Gastrocnemius medialis (tissue), 4 donors: ENCODE measurements at regions of chr20 and their contacts with region 1.

Region 1: DNA sequence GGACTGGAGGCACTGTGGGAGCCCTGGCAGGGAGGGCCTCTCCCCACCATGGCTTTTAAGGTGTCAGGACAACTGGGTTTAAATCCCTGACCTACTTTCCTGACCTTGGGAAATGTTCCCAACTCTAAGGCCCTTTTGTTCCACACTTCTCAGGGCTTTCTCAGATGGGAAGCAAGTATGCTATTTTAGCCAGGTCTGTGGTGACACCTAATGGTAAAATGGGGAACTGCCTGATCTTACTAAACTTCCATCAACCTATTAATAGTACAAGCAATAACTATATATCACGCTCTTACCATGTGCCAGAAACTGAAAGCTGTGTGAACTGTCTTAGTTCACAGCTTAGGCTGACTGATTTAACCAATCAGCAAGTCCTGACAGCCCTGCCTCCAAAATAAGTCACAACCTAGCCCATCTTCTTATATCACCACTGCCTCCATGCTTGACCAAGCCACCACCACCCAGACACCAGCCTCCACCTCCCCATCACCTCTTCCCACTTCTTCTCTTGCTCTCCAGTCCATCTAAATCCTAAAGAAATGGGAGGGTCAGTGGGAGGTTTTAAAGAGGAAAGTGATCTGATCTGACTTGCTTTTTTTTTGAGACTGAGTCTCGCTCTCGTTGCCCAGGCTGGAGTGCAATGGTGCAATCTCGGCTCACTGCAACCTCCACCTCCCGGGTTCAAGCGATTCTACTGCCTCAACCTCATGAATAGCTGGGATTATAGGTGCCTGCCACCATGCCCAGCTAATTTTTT is 6.9 kb upstream of the BLCAP start:
- DNase-seq: no peak
- ATAC-seq: peak; percentile 88 to 94
- H3K4me3 ChIP-seq: no peak overlapping the region
- H3K27ac ChIP-seq: peak overlapping the region in 1 of 4 donors; percentile 50
- H3K4me1 ChIP-seq: peaks cover 0 to 5% of the 10 kb centered on the region in 2 donors
- H3K27me3 ChIP-seq: no peaks in the 10 kb centered on the region
- CTCF ChIP-seq: peak; percentile 83 to 89 (median 88)
- POLR2A ChIP-seq: no peak

Region 2: GRCh38 chr20:36941401-36941835 is 593.2 kb before region 1 on chr20:
- in situ Hi-C with region 1: no loop called
- intact Hi-C with region 1: loop called (anchors 10 kb)
- DNase-seq: no peak
- ATAC-seq: no peak
- H3K4me3 ChIP-seq: no peak overlapping the region
- H3K27ac ChIP-seq: peak overlapping the region; percentile 62 to 85 (median 71)
- H3K4me1 ChIP-seq: peaks cover 45 to 70% of the 10 kb centered on the region in 2 donors
- H3K27me3 ChIP-seq: no peaks in the 10 kb centered on the region
- CTCF ChIP-seq: no peak
- POLR2A ChIP-seq: no peak

Region 3: GRCh38 chr20:37265152-37265551 is 269.4 kb before region 1 on chr20:
- in situ Hi-C with region 1: loop called (anchors 5 kb)
- intact Hi-C with region 1: loop called (anchors 1 kb)
- DNase-seq: no peak
- ATAC-seq: no peak
- H3K4me3 ChIP-seq: no peak overlapping the region
- H3K27ac ChIP-seq: no peak overlapping the region
- H3K4me1 ChIP-seq: no peaks in the 10 kb centered on the region
- H3K27me3 ChIP-seq: no peaks in the 10 kb centered on the region
- CTCF ChIP-seq: no peak
- POLR2A ChIP-seq: no peak

Region 4: DNA sequence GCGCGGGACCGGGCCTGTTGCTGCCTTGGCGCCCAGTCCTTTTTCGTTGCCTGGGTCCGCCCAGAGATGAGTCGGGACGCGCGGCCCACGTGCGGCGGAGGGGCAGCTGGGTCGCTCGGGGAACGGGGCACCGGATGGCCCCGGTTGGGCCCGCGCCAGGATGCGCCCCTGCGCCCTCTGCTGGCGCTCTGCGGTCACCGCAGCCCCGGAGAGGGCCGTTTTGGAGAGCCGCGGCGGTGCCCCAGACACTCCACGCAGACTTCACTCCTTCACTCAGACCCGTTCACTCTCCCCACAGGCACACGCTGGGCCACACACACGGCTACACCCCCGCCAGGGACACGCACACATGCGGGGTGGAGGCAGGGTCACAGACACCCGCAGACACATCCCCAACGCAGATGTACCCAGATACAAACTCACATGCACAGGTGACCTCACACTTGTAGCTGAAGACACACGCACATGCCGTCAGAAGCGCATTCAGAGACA is 149.8 kb before region 1 on chr20:
- in situ Hi-C with region 1: loop called in 3 of 4 experiments (anchors 5 to 25 kb)
- intact Hi-C with region 1: loop called (anchors 2 kb)
- DNase-seq: peak in 1 of 2 donors; percentile 47
- ATAC-seq: peak; percentile 57 to 89
- H3K4me3 ChIP-seq: peak overlapping the region; percentile 54 to 59 (median 57)
- H3K27ac ChIP-seq: no peak overlapping the region
- H3K4me1 ChIP-seq: peaks cover 0 to 5% of the 10 kb centered on the region in 2 donors
- H3K27me3 ChIP-seq: no peaks in the 10 kb centered on the region
- CTCF ChIP-seq: peak; percentile 84 to 97 (median 93)
- POLR2A ChIP-seq: no peak

Region 5: GRCh38 chr20:37406010-37406998 is 128.3 kb before region 1 on chr20:
- in situ Hi-C with region 1: no loop called
- intact Hi-C with region 1: loop called (anchors 2 kb)
- DNase-seq: no peak
- ATAC-seq: peak; percentile 43 to 58
- H3K4me3 ChIP-seq: peak overlapping the region; percentile 21 to 49 (median 32)
- H3K27ac ChIP-seq: no peak overlapping the region
- H3K4me1 ChIP-seq: peaks cover 0 to 3% of the 10 kb centered on the region in 2 donors
- H3K27me3 ChIP-seq: peaks cover 27 to 34% (median 31%) of the 10 kb centered on the region in 3 donors
- CTCF ChIP-seq: no peak
- POLR2A ChIP-seq: no peak